ENCODE measurements at regions of chr3 and their contacts with region 1.

Region 1: GRCh38 chr3:187291001-187291511 is 481 bp downstream of the MASP1 start:
- DNase-seq: peak; percentile 30
- H3K4me3 Mint-ChIP-seq: peak overlapping the region; percentile 18
- H3K27ac Mint-ChIP-seq: no peak overlapping the region
- H3K4me1 Mint-ChIP-seq: peaks cover 29% of the 10 kb centered on the region
- H3K27me3 Mint-ChIP-seq: no peaks in the 10 kb centered on the region
- CTCF ChIP-seq: no peak

Region 2: GRCh38 chr3:187112934-187113793 is 177.9 kb before region 1 on chr3:
- CTCF ChIA-PET with region 1: interaction called, 3 read pairs
- intact Hi-C with region 1: loop called (anchors 1 kb)
- DNase-seq: peak; percentile 24
- H3K4me3 Mint-ChIP-seq: no peak overlapping the region
- H3K27ac Mint-ChIP-seq: no peak overlapping the region
- H3K4me1 Mint-ChIP-seq: peaks cover 12% of the 10 kb centered on the region
- H3K27me3 Mint-ChIP-seq: no peaks in the 10 kb centered on the region
- CTCF ChIP-seq: peak; percentile 59

Region 3: DNA sequence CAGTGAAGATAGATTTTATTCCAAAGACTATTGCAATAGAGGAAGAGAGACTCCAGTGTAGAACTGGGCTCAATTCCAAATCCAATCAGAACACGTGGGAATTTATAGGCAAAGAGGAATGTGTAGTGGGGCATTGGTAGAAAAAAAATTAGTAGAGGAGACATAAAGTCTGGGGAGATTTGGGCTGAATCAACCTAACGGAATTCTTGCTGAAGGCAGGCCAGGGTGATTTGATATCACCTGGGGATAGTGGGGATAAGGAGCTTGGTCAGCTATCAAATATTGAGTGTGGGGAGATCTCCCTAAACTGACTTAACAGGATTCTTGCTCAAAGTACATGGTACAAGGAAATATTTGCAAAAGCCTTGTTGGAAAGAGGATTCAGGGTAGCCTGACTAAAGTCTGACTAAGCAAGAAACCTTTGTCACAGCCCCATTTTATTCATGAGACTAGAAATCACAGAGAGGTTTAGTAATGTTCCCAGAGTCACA is 349.6 kb after region 1 on chr3:
- CTCF ChIA-PET with region 1: no interaction called
- intact Hi-C with region 1: no loop called
- DNase-seq: no peak
- H3K4me3 Mint-ChIP-seq: no peak overlapping the region
- H3K27ac Mint-ChIP-seq: no peak overlapping the region
- H3K4me1 Mint-ChIP-seq: peaks cover 7% of the 10 kb centered on the region
- H3K27me3 Mint-ChIP-seq: peaks cover 36% of the 10 kb centered on the region
- CTCF ChIP-seq: no peak

Measured in Calu3 (cell line).